Aorta (tissue), 5 donors: ENCODE measurements at regions of chr5 and their contacts with region 1.

Region 1: DNA sequence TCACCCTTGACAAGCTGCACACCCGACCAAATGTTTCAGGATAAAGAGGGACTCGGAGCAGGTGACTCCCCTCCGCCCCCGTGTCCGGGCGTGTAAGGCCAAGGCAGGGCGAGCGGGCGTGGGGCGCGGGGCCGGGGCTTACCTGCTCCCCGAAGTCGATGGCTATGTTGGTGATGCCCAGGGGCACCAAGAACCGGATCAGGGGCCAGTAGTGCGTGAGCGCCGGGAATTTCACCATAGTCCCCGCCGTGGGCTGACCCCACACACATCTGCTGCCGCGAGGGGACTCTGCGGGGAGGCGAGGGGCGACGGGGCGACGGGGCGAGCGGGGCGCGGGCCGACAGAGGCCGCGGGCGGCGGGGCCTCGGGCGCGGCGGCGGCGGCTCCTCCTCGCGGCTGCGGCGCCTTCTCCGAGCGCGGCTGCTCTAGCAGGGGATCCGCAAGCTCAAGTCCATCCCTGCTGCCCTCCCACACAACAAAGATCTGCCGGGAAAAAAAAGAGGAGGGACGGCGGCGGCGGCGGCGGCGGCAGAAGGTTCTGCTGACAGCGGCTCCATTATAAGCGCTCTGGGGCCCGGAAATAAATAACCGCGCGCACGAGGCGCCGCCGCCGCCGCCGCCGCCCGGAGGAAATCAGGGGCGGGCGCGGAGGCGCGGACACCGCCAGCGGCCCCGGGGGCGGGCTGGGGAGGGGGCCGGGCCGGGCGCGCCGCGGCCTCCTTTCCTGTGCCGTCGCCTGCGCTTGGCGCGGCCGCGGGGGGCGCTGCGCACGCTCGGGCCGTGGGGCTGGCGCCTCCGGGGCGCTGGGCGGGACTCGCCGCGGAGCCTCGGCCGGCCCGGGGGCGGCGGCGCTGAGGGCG is at the start of gene ANKH:
- DNase-seq: peak; percentile 89 to 92
- ATAC-seq: peak; percentile 93
- H3K4me3 ChIP-seq: peak within 1 kb of the TSS; percentile 85 to 97
- H3K27ac ChIP-seq: peak within 1 kb of the TSS; percentile 69 to 78
- H3K4me1 ChIP-seq: no peaks in the 10 kb centered on the region
- H3K27me3 ChIP-seq: no peaks in the 10 kb centered on the region
- total RNA-seq, gene ANKH: 200 to 257 TPM

Region 2: GRCh38 chr5:14685757-14686156 is 185.7 kb before region 1 on chr5:
- intact Hi-C with region 1: loop called in 1 of 2 experiments (anchors 10 kb)
- DNase-seq: no peak
- ATAC-seq: peak; percentile 65
- H3K4me3 ChIP-seq: no peak overlapping the region
- H3K27ac ChIP-seq: no peak overlapping the region
- H3K4me1 ChIP-seq: peaks cover 1 to 3% of the 10 kb centered on the region in 2 donors
- H3K27me3 ChIP-seq: no peaks in the 10 kb centered on the region

Region 3: GRCh38 chr5:14727428-14727865 is 144.0 kb before region 1 on chr5:
- intact Hi-C with region 1: loop called (anchors 2 to 5 kb)
- DNase-seq: peak; percentile 87 to 93
- ATAC-seq: peak; percentile 86
- H3K4me3 ChIP-seq: no peak overlapping the region
- H3K27ac ChIP-seq: no peak overlapping the region
- H3K4me1 ChIP-seq: no peaks in the 10 kb centered on the region
- H3K27me3 ChIP-seq: no peaks in the 10 kb centered on the region

Region 4: DNA sequence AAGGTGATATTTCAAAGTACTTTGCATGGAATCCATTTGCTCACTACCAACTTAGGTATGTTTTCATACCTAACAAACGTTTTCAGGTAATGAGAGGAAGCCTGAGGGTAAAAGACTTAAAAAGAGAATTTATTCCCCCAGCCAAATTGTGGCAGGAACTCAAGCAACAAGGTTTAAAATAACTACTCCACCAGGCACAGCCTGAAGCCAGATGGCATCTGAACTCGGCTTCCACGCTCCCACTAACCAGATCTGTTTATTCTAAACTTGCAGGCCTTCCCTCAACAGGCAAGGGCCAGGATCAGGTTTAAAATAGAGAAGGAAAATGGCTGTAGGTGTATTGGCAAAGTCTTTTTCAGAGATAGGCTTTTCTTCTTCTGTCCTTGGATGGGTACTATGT is 117.5 kb before region 1 on chr5:
- intact Hi-C with region 1: loop called in 1 of 2 experiments (anchors 10 kb)
- DNase-seq: no peak
- ATAC-seq: no peak
- H3K4me3 ChIP-seq: no peak overlapping the region
- H3K27ac ChIP-seq: no peak overlapping the region
- H3K4me1 ChIP-seq: peaks cover 1 to 3% of the 10 kb centered on the region in 2 donors
- H3K27me3 ChIP-seq: no peaks in the 10 kb centered on the region

Region 5: DNA sequence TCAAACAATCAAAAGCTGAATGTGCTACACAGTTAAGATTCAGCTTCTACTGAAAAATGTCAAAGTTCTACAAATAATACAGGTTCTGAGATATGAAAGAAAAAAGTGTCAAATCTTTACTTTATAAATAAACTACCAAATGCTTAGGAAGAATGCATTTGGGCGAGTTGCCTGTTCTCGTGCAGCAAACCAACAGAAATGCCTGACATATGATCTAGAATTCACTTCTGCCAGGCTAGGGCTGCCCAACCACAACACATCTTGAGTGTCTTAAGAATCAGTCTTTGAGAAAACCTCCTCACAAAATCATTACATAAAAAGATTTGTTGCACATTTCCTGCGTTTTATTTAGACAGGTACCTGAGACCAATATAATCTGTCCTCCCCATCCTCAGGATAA is 42.0 kb before region 1 on chr5:
- intact Hi-C with region 1: loop called in 1 of 2 experiments (anchors 5 kb)
- DNase-seq: no peak
- ATAC-seq: no peak
- H3K4me3 ChIP-seq: no peak overlapping the region
- H3K27ac ChIP-seq: no peak overlapping the region
- H3K4me1 ChIP-seq: peaks cover 3 to 10% of the 10 kb centered on the region in 2 donors
- H3K27me3 ChIP-seq: no peaks in the 10 kb centered on the region

Region 6: DNA sequence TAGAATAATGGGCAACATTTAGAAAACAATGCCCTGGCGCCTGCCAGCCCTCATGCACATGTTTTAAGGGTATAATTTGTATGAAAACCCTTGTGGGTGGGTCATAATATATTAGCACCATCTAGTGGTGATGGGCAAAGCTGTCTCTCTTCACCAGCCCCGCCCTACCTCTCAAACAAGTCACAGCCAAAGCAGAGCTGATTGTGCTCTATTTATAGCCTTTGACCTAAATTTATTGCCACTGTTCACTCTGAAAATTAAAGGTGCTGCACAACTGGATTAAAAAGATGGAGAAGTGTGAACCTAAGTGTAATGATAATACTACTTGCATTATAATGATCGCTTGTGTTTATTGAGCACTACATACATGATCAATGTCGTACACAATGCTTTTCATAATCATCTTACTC is 132.1 kb after region 1 on chr5:
- intact Hi-C with region 1: loop called (anchors 2 to 5 kb)
- DNase-seq: peak in 1 of 2 donors; percentile 58
- ATAC-seq: peak; percentile 79
- H3K4me3 ChIP-seq: no peak overlapping the region
- H3K27ac ChIP-seq: no peak overlapping the region
- H3K4me1 ChIP-seq: peaks cover 0 to 2% of the 10 kb centered on the region in 2 donors
- H3K27me3 ChIP-seq: no peaks in the 10 kb centered on the region